Ascending aorta (tissue), 2 donors: ENCODE measurements at regions of chr11 and their contacts with region 1.

Region 1: GRCh38 chr11:10307442-10308207 is 2.8 kb downstream of the ADM start:
- DNase-seq: peak in 1 of 2 donors; percentile 91
- H3K4me3 ChIP-seq: peak overlapping the region; percentile 69 to 85
- H3K27ac ChIP-seq: peak overlapping the region; percentile 70 to 76
- H3K4me1 ChIP-seq: peaks cover 0 to 32% of the 10 kb centered on the region in 2 donors
- H3K27me3 ChIP-seq: no peaks in the 10 kb centered on the region
- CTCF ChIP-seq: peak; percentile 99 to 100 (median 99)

Region 2: DNA sequence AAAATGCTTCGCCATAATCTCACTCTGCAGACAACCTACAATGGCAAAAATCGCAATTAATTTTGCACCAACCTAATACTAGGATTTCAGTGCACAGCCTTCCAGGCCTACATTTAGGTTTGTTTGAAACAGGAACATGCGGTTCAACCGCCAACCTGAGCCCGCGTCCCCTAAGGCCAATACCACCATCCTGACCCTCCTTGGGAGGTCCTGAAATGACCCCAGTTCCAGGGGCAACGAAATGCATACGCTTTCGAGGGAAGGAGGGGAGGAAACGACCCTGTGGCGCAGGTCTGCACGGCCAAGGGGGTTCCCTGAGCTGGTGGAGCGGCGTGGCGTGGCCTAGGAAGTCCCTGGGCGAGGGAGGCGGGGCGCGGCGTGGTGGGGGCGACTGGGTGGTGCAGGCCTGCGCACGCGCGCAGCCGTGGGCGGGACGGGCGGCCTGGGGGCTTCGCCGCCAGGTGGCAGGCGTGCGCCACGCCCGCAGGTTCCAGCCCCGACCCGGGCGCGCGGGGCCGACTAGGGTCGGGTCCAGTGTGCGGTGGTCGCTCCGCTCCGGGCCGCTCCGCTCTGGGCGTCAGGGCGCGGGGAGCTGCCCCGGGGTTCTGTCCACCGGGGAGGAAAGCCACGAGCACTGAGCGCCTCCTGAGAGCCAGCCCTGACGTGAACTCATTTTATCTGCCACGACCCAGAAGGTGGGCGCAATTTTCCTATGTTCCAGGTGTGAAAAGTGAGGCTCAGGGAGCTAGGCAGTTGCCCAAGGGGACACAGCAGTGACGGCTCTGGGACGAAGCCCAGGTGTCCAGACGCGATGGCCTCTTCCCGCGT is 549.6 kb before region 1 on chr11:
- intact Hi-C with region 1: loop called (anchors 1 kb)
- DNase-seq: peak; percentile 50 to 91
- H3K4me3 ChIP-seq: peak overlapping the region; percentile 70 to 74
- H3K27ac ChIP-seq: peak overlapping the region; percentile 88 to 94
- H3K4me1 ChIP-seq: peaks cover 13 to 23% of the 10 kb centered on the region in 2 donors
- H3K27me3 ChIP-seq: no peaks in the 10 kb centered on the region
- CTCF ChIP-seq: peak in 2 of 3 experiments; percentile 51 to 99

Region 3: DNA sequence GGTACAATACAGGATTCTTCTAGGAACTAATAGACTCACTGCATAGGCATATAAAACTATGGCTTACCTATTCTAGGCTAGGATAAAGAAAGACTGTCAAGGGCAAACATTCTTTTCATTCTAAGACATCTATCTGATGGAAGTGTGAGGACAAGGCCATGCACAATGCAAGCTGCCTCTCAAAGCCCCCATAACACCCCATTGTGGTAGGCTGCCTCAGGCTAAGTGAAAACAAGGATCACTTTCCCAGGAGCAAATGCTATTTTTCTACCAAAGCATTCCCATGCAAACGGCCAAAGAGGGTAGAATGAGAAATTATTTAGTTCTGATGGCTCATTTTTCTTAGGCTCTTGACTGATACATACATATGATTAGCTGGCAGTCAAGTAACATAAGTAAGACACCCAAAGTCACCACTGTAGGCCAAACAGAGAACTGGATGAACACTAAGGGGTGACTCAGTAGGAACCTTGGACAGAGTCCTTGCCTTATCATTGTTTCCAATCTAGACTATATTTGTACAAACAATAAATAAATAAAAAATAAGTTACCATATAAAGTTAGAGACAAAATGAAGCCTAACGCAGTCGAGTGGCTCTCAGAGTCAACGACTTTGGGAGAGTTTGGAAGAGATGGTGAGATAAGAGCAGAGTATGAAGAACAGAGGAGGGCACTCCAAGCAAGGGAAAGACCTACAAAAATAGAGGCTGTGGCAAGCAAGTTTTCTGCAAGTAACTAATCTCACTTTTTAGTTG is 317.2 kb before region 1 on chr11:
- intact Hi-C with region 1: loop called (anchors 2 kb)
- DNase-seq: no peak
- H3K4me3 ChIP-seq: no peak overlapping the region
- H3K27ac ChIP-seq: no peak overlapping the region
- H3K4me1 ChIP-seq: no peaks in the 10 kb centered on the region
- H3K27me3 ChIP-seq: no peaks in the 10 kb centered on the region
- CTCF ChIP-seq: peak in 1 of 3 experiments; percentile 43

Region 4: GRCh38 chr11:10293423-10294289 is 14.0 kb before region 1 on chr11 and contains the start of gene SBF2:
- intact Hi-C with region 1: loop called (anchors 1 kb)
- DNase-seq: peak; percentile 71 to 94
- H3K4me3 ChIP-seq: peak within 1 kb of the TSS; percentile 80 to 90
- H3K27ac ChIP-seq: peak within 1 kb of the TSS; percentile 93
- H3K4me1 ChIP-seq: peaks cover 0 to 6% of the 10 kb centered on the region in 2 donors
- H3K27me3 ChIP-seq: no peaks in the 10 kb centered on the region
- CTCF ChIP-seq: no peak
- total RNA-seq, gene SBF2: 34.5 TPM

Region 5: DNA sequence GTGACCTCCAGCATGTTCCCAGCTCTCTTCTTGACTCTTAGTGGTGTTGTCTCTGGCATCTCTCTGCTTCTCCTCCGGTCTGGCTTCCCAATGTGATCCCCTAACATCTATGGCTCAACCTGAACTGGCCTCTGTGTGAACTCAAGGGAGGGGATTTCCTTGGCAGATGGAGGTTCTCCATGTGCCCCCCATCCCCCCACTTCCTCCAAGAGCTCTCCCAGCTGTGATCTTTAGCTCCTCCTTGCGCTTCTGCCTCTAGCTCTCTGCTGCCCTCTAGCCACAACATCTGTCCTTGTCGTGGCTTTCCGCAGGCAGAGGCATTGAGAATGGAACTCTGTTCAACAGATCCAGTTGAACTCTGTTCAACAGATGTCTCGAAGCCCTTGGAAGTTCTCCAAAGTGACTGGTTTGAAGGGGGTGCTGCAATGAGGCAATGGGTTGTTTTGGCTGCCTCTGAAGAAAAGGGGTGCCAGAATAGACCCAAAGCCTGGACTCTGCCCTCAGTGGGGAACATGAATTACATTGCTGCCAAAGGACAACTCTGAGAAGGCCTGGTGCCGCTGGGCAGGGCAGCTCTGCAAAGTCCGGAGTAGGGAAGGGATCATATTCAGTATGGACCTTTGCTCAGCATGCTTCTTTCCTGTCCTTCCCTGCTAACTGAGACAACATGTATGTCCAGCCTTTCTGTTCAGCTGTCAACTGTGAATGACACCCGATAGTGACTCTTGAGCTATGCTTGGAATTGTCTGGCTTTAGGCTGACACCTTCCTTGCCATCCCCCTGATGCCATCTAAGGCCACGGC is 59.1 kb after region 1 on chr11:
- intact Hi-C with region 1: loop called (anchors 5 kb)
- DNase-seq: peak; percentile 43 to 90
- H3K4me3 ChIP-seq: no peak overlapping the region
- H3K27ac ChIP-seq: peak overlapping the region in 1 of 2 donors; percentile 40
- H3K4me1 ChIP-seq: no peaks in the 10 kb centered on the region
- H3K27me3 ChIP-seq: no peaks in the 10 kb centered on the region
- CTCF ChIP-seq: peak; percentile 79 to 92 (median 81)